Activated naive CD4-positive, alpha-beta T cell treated with anti-CD3 and anti-CD28 coated beads for 36 hours (primary cell): ENCODE measurements at regions of chr21 and their contacts with region 1.

Region 1: DNA sequence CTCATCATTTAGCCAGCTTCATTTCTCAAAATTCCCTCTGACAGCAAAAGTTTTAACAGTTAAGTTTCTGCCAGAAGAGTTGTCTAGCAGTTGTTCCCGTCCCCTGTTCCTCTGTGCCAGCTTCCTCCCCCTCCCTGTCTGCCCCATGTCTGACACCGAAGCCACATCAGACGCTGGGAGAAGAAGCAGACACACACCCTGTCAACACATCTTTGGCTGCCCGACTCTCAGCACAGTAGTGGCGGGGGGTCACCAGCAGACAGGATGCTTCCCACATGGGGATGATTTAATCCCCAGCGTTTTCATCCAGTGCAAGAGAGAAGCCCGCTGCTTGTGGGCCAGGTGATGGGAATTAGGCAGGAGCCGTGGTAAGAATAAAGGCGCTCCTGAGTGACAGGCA is 379.4 kb upstream of the RUNX1 start:
- DNase-seq: peak; percentile 65
- H3K4me3 Mint-ChIP-seq: peak overlapping the region; percentile 42
- H3K27ac Mint-ChIP-seq: peak overlapping the region; percentile 71
- H3K4me1 Mint-ChIP-seq: peaks cover 34% of the 10 kb centered on the region
- H3K27me3 Mint-ChIP-seq: no peaks in the 10 kb centered on the region

Region 2: DNA sequence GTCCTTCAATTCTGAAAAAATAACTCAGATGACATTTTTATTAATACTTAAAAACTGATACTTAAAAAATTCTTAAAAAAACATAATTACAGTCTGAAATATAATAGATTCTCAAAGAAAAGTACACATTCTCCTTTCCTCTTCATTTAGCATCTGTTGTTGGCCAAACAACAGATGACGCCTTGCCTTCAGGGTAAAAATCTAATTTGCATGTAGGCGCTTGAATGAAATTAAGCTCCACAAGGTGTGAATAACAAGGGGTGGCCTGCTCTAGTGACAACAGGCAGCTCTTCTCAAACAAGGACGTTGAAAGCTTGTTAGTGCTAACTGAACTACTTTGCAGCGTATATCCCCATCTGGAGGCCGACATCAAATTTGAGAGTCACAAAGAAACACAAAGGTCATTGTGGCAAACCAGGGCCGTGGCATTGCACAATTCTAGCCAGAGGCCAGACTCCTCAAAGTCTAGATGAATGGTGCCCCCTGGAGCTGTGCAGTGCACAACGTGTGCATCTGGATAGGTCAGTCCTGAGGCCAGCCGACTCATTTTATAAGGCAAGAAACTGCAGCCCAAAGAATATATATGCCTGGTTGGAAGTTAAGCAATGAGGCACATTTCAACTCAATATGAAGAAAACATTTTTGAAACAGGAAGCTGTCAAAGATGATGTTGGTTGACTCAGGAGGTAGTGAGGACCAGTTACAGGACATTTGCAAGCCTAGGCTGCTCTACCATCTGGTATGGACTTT is 79.8 kb after region 1 on chr21:
- CTCF ChIA-PET with region 1: no interaction called
- intact Hi-C with region 1: loop called (anchors 5 kb)
- DNase-seq: peak; percentile 42
- H3K4me3 Mint-ChIP-seq: no peak overlapping the region
- H3K27ac Mint-ChIP-seq: no peak overlapping the region
- H3K4me1 Mint-ChIP-seq: peaks cover 58% of the 10 kb centered on the region
- H3K27me3 Mint-ChIP-seq: no peaks in the 10 kb centered on the region

Region 3: DNA sequence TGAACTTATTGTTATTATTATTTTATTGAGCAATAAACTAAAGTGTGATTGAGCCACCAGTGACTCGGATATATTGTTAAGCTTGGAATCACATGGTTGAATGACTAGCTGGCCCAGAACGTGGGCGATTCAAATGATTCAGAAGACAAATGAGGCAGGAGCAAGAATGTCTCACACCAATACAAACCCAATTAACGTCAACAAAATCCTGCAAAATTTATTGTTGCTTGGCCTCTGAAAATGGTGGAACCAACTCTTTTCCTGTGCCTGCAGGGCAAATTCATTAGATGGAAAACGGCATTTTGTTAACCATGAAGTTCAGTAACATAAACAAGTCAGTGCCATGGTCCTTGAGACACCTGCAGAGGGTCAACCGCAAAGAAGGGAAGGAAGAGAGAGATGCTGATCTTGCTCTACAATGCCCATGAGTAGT is 149.9 kb after region 1 on chr21:
- CTCF ChIA-PET with region 1: no interaction called
- intact Hi-C with region 1: no loop called
- DNase-seq: no peak
- H3K4me3 Mint-ChIP-seq: no peak overlapping the region
- H3K27ac Mint-ChIP-seq: no peak overlapping the region
- H3K4me1 Mint-ChIP-seq: peaks cover 26% of the 10 kb centered on the region
- H3K27me3 Mint-ChIP-seq: peaks cover 2% of the 10 kb centered on the region

Region 4: GRCh38 chr21:35616090-35616489 is 187.6 kb after region 1 on chr21:
- CTCF ChIA-PET with region 1: interaction called, 3 read pairs
- intact Hi-C with region 1: loop called (anchors 5 kb)
- DNase-seq: no peak
- H3K4me3 Mint-ChIP-seq: no peak overlapping the region
- H3K27ac Mint-ChIP-seq: no peak overlapping the region
- H3K4me1 Mint-ChIP-seq: peaks cover 2% of the 10 kb centered on the region
- H3K27me3 Mint-ChIP-seq: no peaks in the 10 kb centered on the region

Region 5: GRCh38 chr21:35932232-35932911 is 503.9 kb after region 1 on chr21:
- CTCF ChIA-PET with region 1: no interaction called
- intact Hi-C with region 1: loop called (anchors 10 kb)
- DNase-seq: peak; percentile 60
- H3K4me3 Mint-ChIP-seq: no peak overlapping the region
- H3K27ac Mint-ChIP-seq: no peak overlapping the region
- H3K4me1 Mint-ChIP-seq: no peaks in the 10 kb centered on the region
- H3K27me3 Mint-ChIP-seq: no peaks in the 10 kb centered on the region